ENCODE measurements at regions of chr6 and their contacts with region 1.

Region 1: DNA sequence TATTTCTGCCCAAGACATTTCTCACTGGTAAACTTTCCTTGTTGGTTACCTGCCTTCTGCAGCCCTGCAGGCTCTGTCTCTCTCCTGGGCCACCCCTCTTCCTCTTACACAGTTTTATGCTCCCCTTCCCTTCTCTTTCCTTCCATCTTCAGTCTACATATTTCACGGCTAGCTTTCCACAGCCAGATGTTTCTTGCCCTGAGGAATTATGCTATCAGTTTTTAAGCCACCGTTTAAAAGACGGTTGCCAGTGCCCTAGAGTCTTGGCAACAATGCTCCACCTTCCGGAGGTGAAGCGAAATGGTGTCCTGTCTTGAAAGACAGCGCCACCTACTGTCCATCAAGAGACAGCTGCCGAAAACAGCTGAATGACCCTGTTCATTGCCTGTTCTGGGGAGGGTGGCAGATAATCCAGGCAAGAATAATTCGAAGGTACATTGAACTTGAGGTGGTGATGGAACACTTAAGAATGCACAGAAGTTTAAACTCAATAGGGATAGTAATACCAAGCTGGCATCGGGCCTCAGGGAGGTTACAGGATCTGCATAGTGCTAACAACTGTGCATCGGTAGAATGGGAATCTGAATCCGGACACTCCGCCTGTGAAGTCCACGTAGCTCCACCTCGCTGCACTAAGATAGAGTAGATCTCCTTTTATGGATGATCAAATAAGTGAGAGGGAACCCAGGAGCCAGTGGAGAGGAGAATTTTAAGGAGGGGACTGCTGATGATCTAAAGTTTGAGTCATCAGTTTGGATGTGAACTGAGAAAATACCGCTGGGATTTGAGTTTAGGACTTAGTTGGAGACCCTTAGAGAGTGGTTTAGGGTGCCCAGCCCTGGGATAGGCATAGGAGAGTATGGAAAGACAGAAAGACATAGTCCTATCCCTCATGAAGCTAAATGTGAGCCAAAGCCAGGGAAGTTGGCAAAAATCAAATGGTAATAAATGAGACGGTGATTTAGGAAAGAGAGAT is 4.8 kb upstream of the TRIM40 start:
- DNase-seq: peak; percentile 57
- H3K4me3 Mint-ChIP-seq: no peak overlapping the region
- H3K27ac Mint-ChIP-seq: no peak overlapping the region
- H3K4me1 Mint-ChIP-seq: peaks cover 30% of the 10 kb centered on the region
- H3K27me3 Mint-ChIP-seq: peaks cover 65% of the 10 kb centered on the region

Region 2: DNA sequence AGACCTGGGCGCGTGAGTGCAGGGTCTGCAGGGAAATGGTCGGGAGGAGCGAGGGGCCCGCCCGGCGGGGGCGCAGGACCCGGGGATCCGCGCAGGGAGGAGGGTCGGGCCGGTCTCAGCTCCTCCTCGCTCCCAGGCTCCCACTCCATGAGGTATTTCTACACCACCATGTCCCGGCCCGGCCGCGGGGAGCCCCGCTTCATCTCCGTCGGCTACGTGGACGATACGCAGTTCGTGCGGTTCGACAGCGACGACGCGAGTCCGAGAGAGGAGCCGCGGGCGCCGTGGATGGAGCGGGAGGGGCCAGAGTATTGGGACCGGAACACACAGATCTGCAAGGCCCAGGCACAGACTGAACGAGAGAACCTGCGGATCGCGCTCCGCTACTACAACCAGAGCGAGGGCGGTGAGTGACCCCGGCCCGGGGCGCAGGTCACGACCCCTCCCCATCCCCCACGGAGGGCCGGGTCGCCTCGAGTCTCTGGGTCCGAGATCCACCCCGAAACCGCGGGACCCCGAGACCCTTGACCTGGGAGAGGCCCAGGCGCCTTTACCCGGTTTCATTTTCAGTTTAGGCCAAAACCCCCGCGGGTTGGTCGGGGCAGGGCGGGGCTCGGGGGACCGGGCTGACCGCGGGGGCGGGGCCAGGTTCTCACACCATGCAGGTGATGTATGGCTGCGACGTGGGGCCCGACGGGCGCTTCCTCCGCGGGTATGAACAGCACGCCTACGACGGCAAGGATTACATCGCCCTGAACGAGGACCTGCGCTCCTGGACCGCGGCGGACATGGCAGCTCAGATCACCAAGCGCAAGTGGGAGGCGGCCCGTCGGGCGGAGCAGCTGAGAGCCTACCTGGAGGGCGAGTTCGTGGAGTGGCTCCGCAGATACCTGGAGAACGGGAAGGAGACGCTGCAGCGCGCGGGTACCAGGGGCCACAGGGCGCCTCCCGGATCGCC is 243.1 kb before region 1 on chr6:
- intact Hi-C with region 1: loop called (anchors 1 kb)
- DNase-seq: peak; percentile 83
- H3K4me3 Mint-ChIP-seq: peak overlapping the region; percentile 87
- H3K27ac Mint-ChIP-seq: peak overlapping the region; percentile 93
- H3K4me1 Mint-ChIP-seq: peaks cover 17% of the 10 kb centered on the region
- H3K27me3 Mint-ChIP-seq: peaks cover 9% of the 10 kb centered on the region

Region 3: DNA sequence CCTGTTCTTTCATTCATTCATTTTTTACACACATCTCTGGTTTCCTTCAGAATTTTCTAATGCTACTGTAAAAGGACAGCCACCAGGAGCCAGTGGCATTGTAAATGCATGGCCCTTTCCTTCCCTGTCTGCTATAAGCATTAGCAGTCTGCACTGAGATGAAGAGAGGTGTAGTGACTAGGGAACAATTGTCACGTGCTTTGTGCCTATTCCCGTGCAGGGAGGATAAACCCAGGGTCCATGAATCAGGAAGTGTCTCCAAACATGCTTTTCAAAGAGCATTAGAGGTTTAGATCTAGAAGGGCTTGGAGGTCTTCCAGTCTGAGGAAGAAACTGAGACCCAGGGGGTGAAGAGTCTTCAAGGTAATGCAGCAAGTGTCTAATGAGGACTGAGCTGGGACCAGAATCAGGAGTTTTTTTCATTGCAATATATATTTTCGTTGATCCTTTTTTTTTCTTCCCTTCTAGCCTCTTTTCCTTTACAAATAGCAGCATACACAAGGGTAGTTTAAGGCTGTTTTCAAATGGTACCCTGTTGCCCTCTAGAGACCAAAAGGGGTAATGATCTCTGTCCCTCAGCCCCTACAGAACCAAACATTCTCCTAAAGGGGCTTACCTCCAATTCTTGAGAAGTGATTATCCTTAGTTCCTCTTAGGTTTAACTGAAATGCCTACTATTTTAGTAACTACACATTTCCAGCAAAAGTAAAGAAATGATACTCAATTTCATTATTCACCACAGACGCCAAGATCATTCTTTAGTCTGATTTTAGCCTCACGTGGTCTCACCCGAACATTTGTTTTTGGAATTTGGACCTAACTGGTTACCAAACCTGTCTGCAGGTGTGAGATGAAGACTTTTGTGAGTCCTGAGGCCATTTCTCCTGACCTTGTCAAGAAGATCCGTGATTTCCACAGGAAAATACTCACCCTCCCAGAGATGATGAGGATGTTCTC is 38.8 kb after region 1 on chr6:
- intact Hi-C with region 1: loop called (anchors 1 kb)
- DNase-seq: no peak
- H3K4me3 Mint-ChIP-seq: no peak overlapping the region
- H3K27ac Mint-ChIP-seq: no peak overlapping the region
- H3K4me1 Mint-ChIP-seq: peaks cover 46% of the 10 kb centered on the region
- H3K27me3 Mint-ChIP-seq: peaks cover 39% of the 10 kb centered on the region